ENCODE measurements at regions of chr14 and their contacts with region 1.

Region 1: DNA sequence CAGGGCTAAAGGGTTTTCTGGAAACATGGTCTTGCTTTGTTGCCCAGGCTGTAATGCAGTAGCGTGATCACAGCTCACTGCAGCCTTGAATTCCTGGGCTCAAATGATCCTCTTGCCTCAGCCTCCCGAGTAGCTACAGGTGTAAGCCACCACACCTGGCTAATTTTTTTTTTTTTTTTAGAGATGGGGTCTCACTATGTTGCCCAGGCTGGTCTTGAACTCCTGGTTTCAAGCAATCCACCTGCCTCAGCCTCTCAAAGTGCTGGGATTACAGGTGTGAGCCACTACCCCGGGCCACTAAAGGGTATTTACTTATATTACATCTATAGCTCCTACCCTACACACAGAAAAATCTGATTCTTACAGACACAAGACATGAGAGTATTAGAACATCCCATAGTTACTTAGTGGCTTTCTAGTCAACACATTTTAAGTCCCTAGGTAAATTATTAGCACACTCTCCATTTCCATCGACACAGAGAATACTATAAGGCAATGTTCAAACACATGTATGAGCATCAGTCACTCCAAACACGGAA is 6.2 kb upstream of the DCAF11 start:
- DNase-seq: no peak
- ATAC-seq: peak; percentile 55; the same call in 2 of the 3 replicates
- H3K4me3 ChIP-seq: no peak overlapping the region
- H3K27ac ChIP-seq: peak overlapping the region; percentile 69; the same call in 1 of the 2 replicates
- H3K4me1 ChIP-seq: peaks cover 7% of the 10 kb centered on the region
- H3K27me3 ChIP-seq: no peaks in the 10 kb centered on the region
- CTCF ChIP-seq: no peak
- EP300 ChIP-seq: no peak
- POLR2A ChIP-seq: no peak
- RAD21 ChIP-seq: no peak

Region 2: DNA sequence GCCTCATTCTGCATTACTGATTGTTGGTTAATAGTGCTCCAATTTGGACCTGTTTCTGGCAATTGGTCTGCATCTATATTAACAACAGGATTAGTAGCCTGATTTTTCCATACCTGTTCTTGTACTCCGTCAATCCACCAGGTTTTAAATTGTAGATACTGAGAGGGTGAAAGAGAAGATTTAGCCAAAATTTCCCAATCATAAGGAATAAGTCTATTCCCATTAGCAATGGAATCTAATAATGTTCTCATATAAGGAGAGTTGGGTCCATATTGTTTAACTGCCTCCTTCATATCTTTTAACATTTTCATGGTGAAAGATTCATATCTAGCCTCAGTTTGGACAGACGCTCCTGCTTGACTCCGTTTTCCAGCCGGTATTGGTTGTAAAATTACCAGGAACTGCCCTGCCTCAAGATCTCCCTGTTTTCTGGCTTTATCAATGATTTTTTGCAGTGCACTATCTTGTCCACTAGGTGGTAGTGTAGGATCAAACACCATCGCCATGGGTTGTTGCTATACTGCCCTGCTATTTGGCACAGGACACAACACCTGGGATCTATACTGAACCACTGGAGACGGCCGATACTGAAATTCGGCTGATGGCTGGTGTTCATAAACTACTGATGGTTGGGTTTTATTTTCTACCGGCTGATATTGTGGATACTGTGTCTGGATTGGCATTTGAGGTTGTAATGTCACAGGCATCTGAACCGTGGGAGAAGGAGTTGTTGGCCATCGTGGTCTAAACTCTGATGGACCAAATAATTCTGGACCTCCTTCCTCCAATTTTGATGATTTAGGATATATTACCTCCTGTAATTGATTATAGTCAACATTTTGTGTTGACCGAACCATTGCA is 94.5 kb before region 1 on chr14:
- CTCF ChIA-PET with region 1: interaction called, 33 read pairs
- POLR2A ChIA-PET with region 1: no interaction called
- RAD21 ChIA-PET with region 1: interaction called, 6 read pairs
- SMC1A ChIA-PET with region 1: interaction called, 11 read pairs
- in situ Hi-C with region 1: no loop called
- intact Hi-C with region 1: loop called (anchors 1 kb)
- DNase-seq: peak; percentile 57
- ATAC-seq: peak; percentile 96
- H3K4me3 ChIP-seq: no peak overlapping the region
- H3K27ac ChIP-seq: no peak overlapping the region
- H3K4me1 ChIP-seq: no peaks in the 10 kb centered on the region
- H3K27me3 ChIP-seq: no peaks in the 10 kb centered on the region
- CTCF ChIP-seq: peak; percentile 77 to 91 (median 81)
- EP300 ChIP-seq: no peak
- POLR2A ChIP-seq: no peak
- RAD21 ChIP-seq: peak; percentile 97

Region 3: GRCh38 chr14:24051789-24052655 is 56.4 kb before region 1 on chr14 and contains the start of gene CARMIL3:
- CTCF ChIA-PET with region 1: interaction called, 164 read pairs
- POLR2A ChIA-PET with region 1: interaction called, 3 read pairs
- RAD21 ChIA-PET with region 1: interaction called, 136 read pairs
- SMC1A ChIA-PET with region 1: interaction called, 122 read pairs
- in situ Hi-C with region 1: no loop called
- intact Hi-C with region 1: no loop called
- DNase-seq: no peak
- ATAC-seq: peak; percentile 93
- H3K4me3 ChIP-seq: peak within 1 kb of the TSS; percentile 74
- H3K27ac ChIP-seq: peak within 1 kb of the TSS; percentile 31; the same call in 1 of the 2 replicates
- H3K4me1 ChIP-seq: peaks cover 23% of the 10 kb centered on the region
- H3K27me3 ChIP-seq: peaks cover 0 to 3% of the 10 kb centered on the region in 2 experiments; a peak in 1 of 4 replicates
- CTCF ChIP-seq: no peak
- EP300 ChIP-seq: no peak
- POLR2A ChIP-seq: peak; percentile 50; the same call in 1 of the 2 replicates
- RAD21 ChIP-seq: no peak
- polyA plus RNA-seq, gene CARMIL3: not detected

Region 4: GRCh38 chr14:24075485-24076301 is 32.7 kb before region 1 on chr14:
- CTCF ChIA-PET with region 1: interaction called, 41 read pairs
- POLR2A ChIA-PET with region 1: interaction called, 6 read pairs
- RAD21 ChIA-PET with region 1: interaction called, 17 read pairs
- SMC1A ChIA-PET with region 1: interaction called, 14 read pairs
- in situ Hi-C with region 1: no loop called
- intact Hi-C with region 1: no loop called
- DNase-seq: no peak
- ATAC-seq: peak; percentile 85
- H3K4me3 ChIP-seq: 0 out of 2 replicates have a peak overlapping the region, but pooled peaks have one; percentile 6
- H3K27ac ChIP-seq: 0 out of 2 replicates have a peak overlapping the region, but pooled peaks have one; percentile 9
- H3K4me1 ChIP-seq: peaks cover 24% of the 10 kb centered on the region
- H3K27me3 ChIP-seq: no peaks in the 10 kb centered on the region
- CTCF ChIP-seq: no peak
- EP300 ChIP-seq: no peak
- POLR2A ChIP-seq: no peak
- RAD21 ChIP-seq: no peak

Region 5: DNA sequence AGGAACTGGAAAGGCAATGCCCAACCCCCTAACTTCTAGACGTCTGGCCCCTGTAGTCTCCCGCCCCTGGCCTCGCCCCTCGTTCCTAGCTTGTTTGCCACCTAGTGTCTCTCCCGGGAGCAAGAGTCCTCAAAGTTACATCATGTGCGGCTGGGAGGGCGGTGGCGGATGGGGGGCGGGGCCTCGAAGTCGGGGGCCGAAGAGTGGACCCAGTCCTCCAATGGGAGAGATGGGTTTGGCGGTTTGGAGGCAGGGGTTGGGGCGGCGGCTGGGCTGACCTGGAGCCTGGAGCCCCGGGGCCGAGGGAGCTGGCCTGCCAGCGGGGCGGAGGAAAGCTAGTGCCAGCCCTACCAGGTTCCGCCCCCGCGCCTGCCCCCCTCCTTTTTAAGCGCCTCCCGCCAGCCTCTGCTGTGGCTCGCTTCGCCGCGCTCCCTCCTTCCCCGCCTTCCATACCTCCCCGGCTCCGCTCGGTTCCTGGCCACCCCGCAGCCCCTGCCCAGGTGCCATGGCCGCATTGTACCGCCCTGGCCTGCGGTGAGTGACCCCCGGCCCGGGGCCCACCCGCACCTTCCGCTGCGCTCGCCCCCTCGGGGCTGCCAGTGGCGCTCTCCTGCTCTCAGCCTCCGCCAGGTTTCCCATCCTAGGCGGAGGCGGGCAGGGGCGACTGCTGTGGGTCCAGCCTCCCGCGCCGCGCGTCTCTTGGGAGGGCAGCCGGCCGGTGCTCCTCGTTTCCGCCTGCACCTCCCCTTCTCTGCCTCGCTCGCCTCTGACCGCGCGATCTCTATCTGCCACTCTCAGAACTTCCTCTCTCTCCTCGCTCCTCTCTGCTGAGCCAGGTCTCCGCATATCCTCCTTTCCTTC is 14.3 kb before region 1 on chr14 and contains the start of gene PCK2:
- CTCF ChIA-PET with region 1: interaction called, 294 read pairs
- POLR2A ChIA-PET with region 1: interaction called, 90 read pairs
- RAD21 ChIA-PET with region 1: interaction called, 153 read pairs
- SMC1A ChIA-PET with region 1: interaction called, 195 read pairs
- in situ Hi-C with region 1: no loop called
- intact Hi-C with region 1: no loop called
- DNase-seq: no peak
- ATAC-seq: peak; percentile 79
- H3K4me3 ChIP-seq: peak within 1 kb of the TSS; percentile 98
- H3K27ac ChIP-seq: peak within 1 kb of the TSS; percentile 99
- H3K4me1 ChIP-seq: 0 out of 2 replicates have a peak, but pooled peaks cover 3% of the 10 kb centered on the region
- H3K27me3 ChIP-seq: no peaks in the 10 kb centered on the region
- CTCF ChIP-seq: no peak
- EP300 ChIP-seq: no peak
- POLR2A ChIP-seq: peak; percentile 91
- RAD21 ChIP-seq: no peak
- polyA plus RNA-seq, gene PCK2: 6.6 to 12.3 TPM

Region 6: GRCh38 chr14:24135834-24136542 is 27.6 kb after region 1 on chr14 and contains the start of gene PSME1:
- CTCF ChIA-PET with region 1: interaction called, 39 read pairs
- POLR2A ChIA-PET with region 1: interaction called, 276 read pairs
- RAD21 ChIA-PET with region 1: interaction called, 69 read pairs
- SMC1A ChIA-PET with region 1: interaction called, 70 read pairs
- in situ Hi-C with region 1: no loop called
- intact Hi-C with region 1: no loop called
- DNase-seq: peak; percentile 75
- ATAC-seq: peak; percentile 94
- H3K4me3 ChIP-seq: peak within 1 kb of the TSS; percentile 99
- H3K27ac ChIP-seq: peak within 1 kb of the TSS; percentile 95
- H3K4me1 ChIP-seq: peaks cover 40% of the 10 kb centered on the region
- H3K27me3 ChIP-seq: no peaks in the 10 kb centered on the region
- CTCF ChIP-seq: no peak
- EP300 ChIP-seq: no peak
- POLR2A ChIP-seq: peak; percentile 86
- RAD21 ChIP-seq: no peak
- polyA plus RNA-seq, gene PSME1: 1,299 to 1,378 TPM

Region 7: DNA sequence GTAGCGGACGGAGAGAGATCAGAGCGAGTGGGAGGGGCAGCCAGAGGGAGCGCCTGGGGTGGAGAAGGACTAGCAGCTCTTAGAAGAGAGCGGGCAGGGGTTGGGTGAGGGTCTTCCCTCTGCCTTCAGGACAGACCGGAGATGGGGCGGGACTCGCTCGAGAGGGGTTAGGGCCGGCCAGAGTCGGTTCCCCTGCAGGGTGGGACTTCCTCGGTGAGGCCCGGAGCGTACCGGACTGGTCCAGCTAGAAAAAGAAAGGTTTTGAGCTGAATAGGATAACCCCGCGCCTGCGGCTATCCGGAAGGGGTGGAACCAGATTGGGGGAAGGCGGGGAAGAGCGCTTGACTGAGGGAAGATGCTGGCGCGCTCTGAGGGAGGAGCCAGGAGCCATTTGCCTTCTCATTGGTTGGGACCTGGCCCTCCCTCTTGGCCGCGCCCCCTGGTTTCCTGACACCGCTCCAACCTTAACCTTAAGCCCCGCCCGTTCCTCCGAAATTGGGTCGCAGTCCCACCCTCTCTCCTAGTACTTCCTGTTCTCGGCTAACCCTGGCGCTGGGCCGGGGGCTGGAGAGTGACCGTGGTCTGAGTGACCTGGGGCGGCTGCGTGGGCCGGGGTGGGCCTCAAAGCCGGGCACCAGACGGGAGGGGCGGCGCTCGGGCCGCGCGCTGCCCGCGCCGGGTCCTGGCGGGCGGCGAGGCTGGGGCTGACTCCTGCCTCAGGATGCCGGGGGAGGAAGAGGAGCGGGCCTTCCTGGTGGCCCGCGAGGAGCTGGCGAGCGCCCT is 38.8 kb after region 1 on chr14 and contains the start of gene RNF31:
- CTCF ChIA-PET with region 1: interaction called, 21 read pairs
- POLR2A ChIA-PET with region 1: interaction called, 84 read pairs
- RAD21 ChIA-PET with region 1: interaction called, 15 read pairs
- SMC1A ChIA-PET with region 1: interaction called, 32 read pairs
- in situ Hi-C with region 1: no loop called
- intact Hi-C with region 1: no loop called
- DNase-seq: peak; percentile 92
- ATAC-seq: peak; percentile 93
- H3K4me3 ChIP-seq: peak within 1 kb of the TSS; percentile 82
- H3K27ac ChIP-seq: peak within 1 kb of the TSS; percentile 94
- H3K4me1 ChIP-seq: peaks cover 11% of the 10 kb centered on the region
- H3K27me3 ChIP-seq: no peaks in the 10 kb centered on the region
- CTCF ChIP-seq: no peak
- EP300 ChIP-seq: no peak
- POLR2A ChIP-seq: peak; percentile 28
- RAD21 ChIP-seq: no peak
- polyA plus RNA-seq, gene RNF31: 8.5 to 19.0 TPM

Region 8: DNA sequence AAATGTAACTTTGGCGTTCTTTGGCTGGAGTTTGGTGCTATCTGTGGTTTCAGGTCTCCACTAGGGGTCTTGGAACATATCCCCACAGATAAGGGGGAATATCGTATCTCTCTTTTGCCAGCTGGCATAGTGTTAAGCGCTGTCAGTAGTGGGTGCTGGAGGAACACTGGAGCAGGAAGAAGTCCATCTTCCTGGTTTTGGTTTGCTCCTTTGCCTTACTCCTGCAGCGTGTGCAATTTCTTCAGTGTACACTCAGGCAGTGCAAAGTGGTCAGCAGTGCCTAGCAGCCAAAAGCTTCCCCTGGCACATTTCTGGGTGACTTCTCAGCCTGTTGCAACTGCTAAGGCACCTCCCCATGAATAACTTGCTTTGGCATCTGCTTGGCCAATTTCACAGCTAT is 243.1 kb after region 1 on chr14:
- CTCF ChIA-PET with region 1: no interaction called
- POLR2A ChIA-PET with region 1: no interaction called
- RAD21 ChIA-PET with region 1: no interaction called
- SMC1A ChIA-PET with region 1: no interaction called
- in situ Hi-C with region 1: no loop called
- intact Hi-C with region 1: no loop called
- DNase-seq: no peak
- ATAC-seq: no peak; the same call in 2 of the 3 replicates
- H3K4me3 ChIP-seq: no peak overlapping the region
- H3K27ac ChIP-seq: no peak overlapping the region
- H3K4me1 ChIP-seq: no peaks in the 10 kb centered on the region
- H3K27me3 ChIP-seq: peaks cover 1 to 4% of the 10 kb centered on the region in 2 experiments; a peak in 3 of 4 replicates
- CTCF ChIP-seq: no peak
- EP300 ChIP-seq: no peak
- POLR2A ChIP-seq: no peak
- RAD21 ChIP-seq: no peak

Measured in GM12878 (cell line).